HEK293 (cell line): ENCODE measurements at regions of chr7 and their contacts with region 1.

Region 1: GRCh38 chr7:5677538-5678294 is 103.7 kb downstream of the RNF216 start:
- H3K4me3 ChIP-seq: no peak overlapping the region
- H3K27ac ChIP-seq: no peak overlapping the region
- H3K4me1 ChIP-seq: no peaks in the 10 kb centered on the region
- CTCF ChIP-seq: peak; percentile 41; the same call in 1 of the 2 replicates

Region 2: DNA sequence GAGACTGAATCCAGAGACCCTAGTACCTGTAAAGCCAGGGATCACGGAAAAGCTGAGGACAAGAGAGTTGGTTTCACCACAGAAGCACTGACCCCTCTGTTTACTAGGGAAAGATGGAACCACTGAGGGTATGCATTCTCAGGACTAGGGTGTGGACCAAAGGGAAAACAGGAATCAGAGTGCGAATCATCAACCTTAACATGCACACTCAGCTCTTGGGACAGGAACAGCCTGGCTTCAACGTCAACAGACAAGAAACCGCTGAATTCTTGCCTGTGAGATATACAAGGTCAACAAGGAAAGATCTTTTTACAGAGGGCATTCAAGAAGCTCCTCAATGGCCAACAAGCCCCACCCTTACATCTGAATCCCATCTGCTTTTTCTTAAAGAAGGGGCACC is 268.9 kb before region 1 on chr7:
- CTCF ChIA-PET with region 1: interaction called, 10 read pairs
- POLR2A ChIA-PET with region 1: no interaction called
- H3K4me3 ChIP-seq: no peak overlapping the region
- H3K27ac ChIP-seq: no peak overlapping the region
- H3K4me1 ChIP-seq: no peaks in the 10 kb centered on the region
- CTCF ChIP-seq: no peak

Region 3: GRCh38 chr7:5689118-5689517 is 11.4 kb after region 1 on chr7:
- CTCF ChIA-PET with region 1: interaction called, 22 read pairs
- POLR2A ChIA-PET with region 1: no interaction called
- H3K4me3 ChIP-seq: no peak overlapping the region
- H3K27ac ChIP-seq: no peak overlapping the region
- H3K4me1 ChIP-seq: peaks cover 13% of the 10 kb centered on the region; the same call in 1 of the 2 replicates
- CTCF ChIP-seq: no peak

Region 4: DNA sequence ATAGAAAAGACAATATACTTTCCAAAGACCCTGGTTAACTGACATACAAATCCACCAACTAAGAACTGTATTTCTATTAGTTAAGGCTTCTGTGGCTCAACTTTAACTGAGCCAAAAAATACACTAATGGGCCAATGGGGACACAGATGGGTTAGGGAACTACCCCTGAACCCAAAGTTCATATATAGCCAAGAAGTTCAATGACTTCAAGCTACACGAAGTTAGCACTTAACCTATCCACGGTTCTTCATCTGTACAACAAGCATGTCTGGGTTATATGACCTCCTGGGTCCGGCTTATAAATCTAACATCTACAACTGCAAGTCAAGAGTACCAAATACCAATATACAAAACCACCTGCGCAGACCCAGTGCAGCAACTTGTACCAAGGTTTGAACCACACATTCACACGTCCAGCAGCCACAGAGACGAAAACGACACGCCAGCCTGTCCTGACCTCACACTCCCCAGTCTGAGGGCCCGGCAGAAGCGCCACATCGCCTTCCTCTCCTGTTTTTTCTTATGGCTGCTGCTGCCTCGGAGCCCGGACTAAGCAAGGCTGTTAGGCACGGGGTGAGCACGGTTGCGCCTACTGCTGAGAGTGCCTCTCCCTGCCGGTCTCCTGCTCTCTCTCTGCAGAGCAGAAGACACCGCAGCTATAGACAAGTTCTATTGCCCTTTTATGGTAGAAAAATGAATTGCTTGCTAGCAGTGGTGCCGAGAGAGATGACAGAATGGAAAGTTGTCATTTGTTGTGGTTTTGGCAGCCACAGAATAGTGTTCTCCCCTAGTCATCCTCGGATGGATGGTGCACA is 17.4 kb after region 1 on chr7:
- CTCF ChIA-PET with region 1: interaction called, 22 read pairs
- POLR2A ChIA-PET with region 1: no interaction called
- H3K4me3 ChIP-seq: no peak overlapping the region
- H3K27ac ChIP-seq: no peak overlapping the region
- H3K4me1 ChIP-seq: peaks cover 13% of the 10 kb centered on the region
- CTCF ChIP-seq: no peak

Region 5: DNA sequence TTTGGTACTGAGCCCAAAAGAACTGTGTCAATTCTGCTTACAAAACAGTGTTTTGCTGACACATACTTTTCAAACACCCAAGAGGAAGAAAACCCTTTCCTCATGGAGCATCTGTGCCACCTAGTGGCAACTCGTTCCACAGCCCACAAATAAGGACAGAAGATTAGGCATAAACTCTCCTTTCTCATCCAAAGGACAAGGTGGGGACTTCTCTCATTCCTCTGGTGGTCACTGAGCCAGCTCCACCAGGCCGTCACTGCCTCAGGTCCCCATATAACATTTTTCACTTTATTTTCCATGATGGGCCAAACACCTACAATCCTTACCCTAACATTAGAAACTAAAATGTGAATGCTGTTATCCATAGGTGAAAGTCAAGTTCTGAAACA is 26.8 kb after region 1 on chr7:
- CTCF ChIA-PET with region 1: interaction called, 24 read pairs
- POLR2A ChIA-PET with region 1: no interaction called
- H3K4me3 ChIP-seq: no peak overlapping the region
- H3K27ac ChIP-seq: no peak overlapping the region
- H3K4me1 ChIP-seq: no peaks in the 10 kb centered on the region; the same call in 1 of the 2 replicates
- CTCF ChIP-seq: no peak; the same call in 1 of the 2 replicates